ENCODE measurements at regions of chr17 and their contacts with region 1.

Region 1: GRCh38 chr17:4420692-4421131 is 13.0 kb upstream of the SPNS3 start:
- DNase-seq: peak; percentile 68 to 74 (median 70)
- ATAC-seq: peak; percentile 92
- H3K4me3 ChIP-seq: no peak overlapping the region
- H3K27ac ChIP-seq: no peak overlapping the region
- H3K4me1 ChIP-seq: no peaks in the 10 kb centered on the region; a peak in 1 of 5 replicates
- H3K27me3 ChIP-seq: peaks cover 0 to 6% of the 10 kb centered on the region in 2 experiments; a peak in 1 of 5 replicates
- CTCF ChIP-seq: peak; percentile 77 to 82 (median 78)
- EP300 ChIP-seq: no peak
- POLR2A ChIP-seq: no peak
- RAD21 ChIP-seq: peak; percentile 53 to 78

Region 2: GRCh38 chr17:4540224-4540641 is 119.5 kb after region 1 on chr17:
- CTCF ChIA-PET with region 1: no interaction called
- POLR2A ChIA-PET with region 1: no interaction called
- in situ Hi-C with region 1: no loop called
- intact Hi-C with region 1: loop called (anchors 5 kb)
- DNase-seq: peak in 3 of 4 experiments; percentile 30 to 49 (median 38)
- ATAC-seq: peak; percentile 51
- H3K4me3 ChIP-seq: no peak overlapping the region
- H3K27ac ChIP-seq: no peak overlapping the region
- H3K4me1 ChIP-seq: peaks cover 0 to 77% of the 10 kb centered on the region in 2 experiments; a peak in 3 of 5 replicates
- H3K27me3 ChIP-seq: no peaks in the 10 kb centered on the region
- CTCF ChIP-seq: peak; percentile 53 to 99 (median 81)
- EP300 ChIP-seq: no peak
- POLR2A ChIP-seq: no peak
- RAD21 ChIP-seq: peak in 1 of 2 experiments; percentile 46; a peak in 2 of 4 replicates

Measured in K562 (cell line).